Heart right ventricle (tissue), 16 donors: ENCODE measurements at regions of chr3 and their contacts with region 1.

Region 1: GRCh38 chr3:112303764-112304325 is 9.8 kb upstream of the SLC9C1 start:
- DNase-seq: no peak
- ATAC-seq: peak in 7 of 8 donors; percentile 48 to 70 (median 63)
- H3K4me3 ChIP-seq: peak overlapping the region; percentile 16 to 59 (median 50)
- H3K27ac ChIP-seq: peak overlapping the region in 4 of 10 donors; percentile 17 to 63 (median 40)
- H3K4me1 ChIP-seq: peaks cover 0 to 34% (median 19%) of the 10 kb centered on the region in 9 donors
- H3K27me3 ChIP-seq: no peaks in the 10 kb centered on the region
- CTCF ChIP-seq: no peak

Region 2: GRCh38 chr3:112111785-112112402 is 192.0 kb before region 1 on chr3:
- intact Hi-C with region 1: loop called in 3 of 10 experiments (anchors 10 kb)
- DNase-seq: peak in 1 of 2 donors; percentile 54
- ATAC-seq: peak in 7 of 8 donors; percentile 54 to 80 (median 76)
- H3K4me3 ChIP-seq: no peak overlapping the region
- H3K27ac ChIP-seq: no peak overlapping the region
- H3K4me1 ChIP-seq: peaks cover 0 to 17% (median 9%) of the 10 kb centered on the region in 9 donors
- H3K27me3 ChIP-seq: no peaks in the 10 kb centered on the region
- CTCF ChIP-seq: peak; percentile 37 to 88 (median 78)

Region 3: DNA sequence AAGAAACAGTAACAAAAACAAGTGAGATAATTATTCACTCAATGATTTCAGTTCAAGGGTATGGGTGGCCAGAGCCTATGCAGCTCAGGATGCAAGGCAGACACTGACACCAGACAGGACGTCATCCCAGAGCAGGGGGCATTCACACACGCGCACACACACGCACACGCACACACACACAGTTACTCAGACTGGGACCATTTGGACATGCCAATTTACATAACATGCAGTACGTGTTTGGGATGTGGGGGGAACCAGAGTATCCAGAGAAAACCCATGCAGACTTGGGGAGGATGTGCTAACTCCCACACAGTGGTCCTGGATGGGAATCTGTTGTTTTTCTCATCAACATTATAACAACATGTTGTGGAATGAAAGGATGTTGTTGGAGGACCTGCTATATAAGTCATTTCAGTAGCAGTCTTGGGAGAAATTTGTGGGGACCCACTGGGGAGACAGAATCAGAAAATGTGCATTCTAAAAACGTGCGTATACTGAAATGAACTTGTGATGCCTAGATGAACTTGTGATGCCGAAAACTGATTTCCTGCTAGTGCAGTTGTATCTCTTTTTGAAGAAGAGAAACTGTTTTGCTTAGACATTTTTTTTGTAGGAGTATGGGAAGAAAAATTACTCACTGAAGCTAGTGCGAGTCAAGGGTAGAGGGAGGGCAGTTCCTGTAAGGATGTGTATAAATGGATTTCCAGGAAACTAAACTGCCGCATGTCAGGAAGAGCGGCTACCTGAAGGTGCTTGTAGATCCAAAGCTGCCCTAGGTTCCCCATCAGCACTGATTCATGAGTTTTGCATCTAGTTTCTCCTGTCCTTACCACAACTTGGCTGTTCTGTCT is 54.3 kb after region 1 on chr3:
- intact Hi-C with region 1: no loop called
- DNase-seq: peak in 1 of 2 donors; percentile 47
- ATAC-seq: peak; percentile 44 to 77 (median 62)
- H3K4me3 ChIP-seq: peak overlapping the region in 9 of 10 donors; percentile 7 to 54 (median 44)
- H3K27ac ChIP-seq: peak overlapping the region in 9 of 10 donors; percentile 40 to 92 (median 76)
- H3K4me1 ChIP-seq: peaks cover 0 to 25% (median 9%) of the 10 kb centered on the region in 9 donors
- H3K27me3 ChIP-seq: no peaks in the 10 kb centered on the region
- CTCF ChIP-seq: no peak